H1 (cell line): ENCODE measurements at regions of chr12 and their contacts with region 1.

Region 1: GRCh38 chr12:128823916-128824839 is at the start of gene SLC15A4:
- DNase-seq: peak; percentile 85 to 95
- H3K4me3 ChIP-seq: peak within 1 kb of the TSS; percentile 76 to 85 (median 82)
- H3K27ac ChIP-seq: peak within 1 kb of the TSS; percentile 93
- H3K4me1 ChIP-seq: peaks cover 3 to 20% (median 4%) of the 10 kb centered on the region in 4 experiments; a peak in 5 of 7 replicates
- H3K27me3 ChIP-seq: no peaks in the 10 kb centered on the region
- CTCF ChIP-seq: peak; percentile 10 to 24 (median 13); a peak in 3 of 4 replicates
- EP300 ChIP-seq: no peak
- POLR2A ChIP-seq: peak; percentile 95 to 98
- RAD21 ChIP-seq: no peak; a peak in 1 of 4 replicates
- total RNA-seq, gene SLC15A4: 22.6 and 22.7 TPM in 2 replicates

Region 2: GRCh38 chr12:127809275-127809674 is 1014.9 kb before region 1 on chr12:
- CTCF ChIA-PET with region 1: no interaction called
- POLR2A ChIA-PET with region 1: no interaction called
- DNase-seq: no peak
- H3K4me3 ChIP-seq: no peak overlapping the region
- H3K27ac ChIP-seq: no peak overlapping the region
- H3K4me1 ChIP-seq: peaks cover 0 to 4% (median 2%) of the 10 kb centered on the region in 4 experiments; a peak in 1 of 7 replicates
- H3K27me3 ChIP-seq: no peaks in the 10 kb centered on the region
- CTCF ChIP-seq: no peak
- EP300 ChIP-seq: no peak
- POLR2A ChIP-seq: no peak
- RAD21 ChIP-seq: no peak

Region 3: DNA sequence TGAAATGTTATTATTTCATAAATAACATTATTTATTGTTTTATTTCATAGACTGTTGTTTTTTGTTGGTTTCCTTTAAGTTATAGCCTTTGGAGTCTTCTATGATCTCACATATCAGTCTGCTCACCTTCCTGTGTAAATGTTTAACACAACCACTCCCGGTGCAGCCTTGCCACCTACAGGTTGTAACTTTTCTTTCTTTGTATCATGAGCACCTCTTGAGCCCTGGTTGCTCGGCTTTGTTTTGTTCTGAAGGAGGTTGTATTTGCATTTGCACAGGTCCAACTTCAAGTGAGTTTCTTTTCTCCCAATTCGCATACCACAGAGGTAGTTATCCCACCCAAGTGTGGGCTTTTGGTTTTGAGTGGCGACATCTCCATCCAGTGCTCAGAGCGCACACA is 121.8 kb before region 1 on chr12:
- CTCF ChIA-PET with region 1: no interaction called
- POLR2A ChIA-PET with region 1: no interaction called
- DNase-seq: no peak
- H3K4me3 ChIP-seq: no peak overlapping the region
- H3K27ac ChIP-seq: no peak overlapping the region
- H3K4me1 ChIP-seq: peaks cover 0 to 3% (median under 1%) of the 10 kb centered on the region in 4 experiments; a peak in 2 of 7 replicates
- H3K27me3 ChIP-seq: no peaks in the 10 kb centered on the region; a peak in 2 of 7 replicates
- CTCF ChIP-seq: peak in 1 of 3 experiments; percentile 12; a peak in 1 of 4 replicates
- EP300 ChIP-seq: no peak
- POLR2A ChIP-seq: no peak
- RAD21 ChIP-seq: peak; percentile 26 to 29; a peak in 3 of 4 replicates

Region 4: DNA sequence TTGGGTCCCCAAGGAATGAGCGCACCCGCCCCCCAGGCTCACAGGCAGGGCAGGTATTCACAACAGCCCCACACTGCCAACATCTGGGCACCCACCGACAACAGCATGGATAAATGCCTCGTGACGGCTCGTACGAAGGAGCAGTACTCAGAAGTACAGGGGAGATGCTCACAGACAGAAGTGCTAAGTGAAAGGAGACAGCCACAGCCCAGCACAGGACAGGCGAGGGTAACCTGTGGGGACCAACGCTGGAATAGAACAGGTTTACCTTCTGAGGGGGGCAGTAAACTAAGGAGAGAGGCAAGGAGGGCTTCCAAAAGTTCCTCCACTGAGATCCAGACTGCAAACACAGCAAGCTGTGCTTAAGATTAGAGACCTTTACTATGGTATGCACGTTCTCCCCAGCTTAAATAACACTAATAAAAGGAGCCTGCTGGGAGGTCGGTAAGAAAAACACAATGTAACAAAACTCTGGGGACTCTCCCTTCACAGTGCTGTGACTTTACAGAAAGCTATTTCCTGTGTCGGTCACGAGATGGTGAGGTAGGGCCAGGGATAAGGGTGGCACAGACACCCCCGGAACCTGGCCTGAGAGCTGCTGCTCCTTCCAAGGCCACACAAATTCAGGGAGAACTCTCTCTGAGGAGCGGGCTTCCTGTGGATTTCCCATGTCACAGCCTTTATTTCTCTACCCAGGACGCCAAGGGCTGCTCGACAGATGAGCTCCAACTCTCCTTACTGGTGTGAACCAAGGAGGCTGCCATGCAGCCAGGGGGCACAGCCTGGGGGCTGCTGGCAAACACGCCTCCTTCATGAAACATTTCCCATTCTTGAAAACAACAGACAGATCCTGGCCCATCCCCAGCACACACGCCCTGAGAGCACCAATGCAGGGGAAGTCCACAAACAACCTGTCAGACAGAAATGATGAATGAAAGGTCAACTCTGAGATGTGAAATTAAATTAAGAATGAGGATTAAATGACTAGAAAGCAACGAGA is 26.8 kb before region 1 on chr12:
- CTCF ChIA-PET with region 1: interaction called, 13 read pairs
- POLR2A ChIA-PET with region 1: interaction called, 6 read pairs
- DNase-seq: peak in 1 of 2 experiments; percentile 50
- H3K4me3 ChIP-seq: no peak overlapping the region; a peak in 1 of 8 replicates
- H3K27ac ChIP-seq: no peak overlapping the region
- H3K4me1 ChIP-seq: peaks cover 7 to 14% (median 11%) of the 10 kb centered on the region in 4 experiments
- H3K27me3 ChIP-seq: no peaks in the 10 kb centered on the region; a peak in 2 of 7 replicates
- CTCF ChIP-seq: no peak
- EP300 ChIP-seq: peak in 1 of 2 experiments; percentile 65; a peak in 1 of 3 replicates
- POLR2A ChIP-seq: no peak
- RAD21 ChIP-seq: peak; percentile 13 to 20; a peak in 2 of 4 replicates

Region 5: DNA sequence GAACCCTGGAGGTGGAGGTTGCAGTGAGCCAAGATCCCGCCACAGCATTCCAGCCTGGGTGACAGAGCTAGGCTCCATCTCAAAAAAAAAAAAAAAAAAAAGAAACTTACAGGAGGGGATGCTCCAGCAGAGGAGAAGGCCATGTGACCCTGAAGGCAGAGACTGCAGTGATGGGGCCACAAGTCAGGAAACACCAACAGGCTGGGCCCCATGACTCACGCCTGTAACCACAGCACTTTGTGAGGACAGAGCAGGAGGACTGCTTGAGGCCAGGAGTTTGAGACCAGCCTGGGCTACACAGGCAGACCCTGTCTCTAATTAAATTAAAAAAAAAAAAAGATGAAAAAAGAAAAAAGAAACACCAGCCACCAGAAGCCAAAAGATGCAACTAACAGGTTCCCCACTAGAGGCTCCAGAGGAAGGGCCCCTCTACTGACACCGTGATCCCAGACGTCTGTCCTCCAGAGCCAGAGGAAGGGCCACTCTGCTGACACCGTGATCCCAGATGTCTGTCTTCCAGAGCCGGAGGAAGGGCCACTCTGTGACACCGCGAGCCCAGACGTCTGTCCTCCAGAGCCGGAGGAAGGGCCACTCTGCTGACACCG is 20.0 kb after region 1 on chr12:
- CTCF ChIA-PET with region 1: interaction called, 6 read pairs
- POLR2A ChIA-PET with region 1: interaction called, 12 read pairs
- DNase-seq: peak in 1 of 2 experiments; percentile 50
- H3K4me3 ChIP-seq: no peak overlapping the region
- H3K27ac ChIP-seq: no peak overlapping the region
- H3K4me1 ChIP-seq: peaks cover 0 to 2% (median under 1%) of the 10 kb centered on the region in 4 experiments; a peak in 2 of 7 replicates
- H3K27me3 ChIP-seq: no peaks in the 10 kb centered on the region
- CTCF ChIP-seq: peak; percentile 46 to 60 (median 58)
- EP300 ChIP-seq: no peak
- POLR2A ChIP-seq: no peak
- RAD21 ChIP-seq: peak; percentile 47 to 60

Region 6: GRCh38 chr12:128853575-128854197 is 29.5 kb after region 1 on chr12:
- CTCF ChIA-PET with region 1: interaction called, 4 read pairs
- POLR2A ChIA-PET with region 1: interaction called, 11 read pairs
- DNase-seq: peak in 1 of 2 experiments; percentile 64
- H3K4me3 ChIP-seq: peak overlapping the region; percentile 62 to 75 (median 64)
- H3K27ac ChIP-seq: no peak overlapping the region
- H3K4me1 ChIP-seq: peaks cover 0 to 6% (median 1%) of the 10 kb centered on the region in 4 experiments; a peak in 1 of 7 replicates
- H3K27me3 ChIP-seq: peaks cover 0 to 27% (median 16%) of the 10 kb centered on the region in 4 experiments; a peak in 6 of 7 replicates
- CTCF ChIP-seq: no peak
- EP300 ChIP-seq: no peak
- POLR2A ChIP-seq: no peak
- RAD21 ChIP-seq: no peak

Region 7: GRCh38 chr12:128920468-128920867 is 96.3 kb after region 1 on chr12:
- CTCF ChIA-PET with region 1: no interaction called
- POLR2A ChIA-PET with region 1: no interaction called
- DNase-seq: no peak
- H3K4me3 ChIP-seq: no peak overlapping the region
- H3K27ac ChIP-seq: no peak overlapping the region
- H3K4me1 ChIP-seq: no peaks in the 10 kb centered on the region
- H3K27me3 ChIP-seq: no peaks in the 10 kb centered on the region
- CTCF ChIP-seq: no peak
- EP300 ChIP-seq: no peak
- POLR2A ChIP-seq: no peak
- RAD21 ChIP-seq: no peak